ENCODE measurements at regions of chr4 and their contacts with region 1.

Region 1: GRCh38 chr4:37793562-37793961 is 32.9 kb upstream of the PGM2 start:
- DNase-seq: peak in 3 of 4 donors; percentile 13 to 21 (median 18)
- ATAC-seq: no peak
- H3K4me3 ChIP-seq: no peak overlapping the region
- H3K27ac ChIP-seq: no peak overlapping the region
- H3K4me1 ChIP-seq: no peaks in the 10 kb centered on the region
- H3K27me3 ChIP-seq: no peaks in the 10 kb centered on the region
- CTCF ChIP-seq: peak in 6 of 7 experiments; percentile 19 to 69 (median 54)
- POLR2A ChIP-seq: no peak

Region 2: GRCh38 chr4:37603070-37603468 is 190.5 kb before region 1 on chr4:
- intact Hi-C with region 1: loop called (anchors 10 kb)
- DNase-seq: peak; percentile 78 to 87 (median 82)
- ATAC-seq: peak; percentile 88
- H3K4me3 ChIP-seq: no peak overlapping the region
- H3K27ac ChIP-seq: no peak overlapping the region
- H3K4me1 ChIP-seq: peaks cover 24% of the 10 kb centered on the region
- H3K27me3 ChIP-seq: no peaks in the 10 kb centered on the region
- CTCF ChIP-seq: peak; percentile 86 to 95 (median 94)
- POLR2A ChIP-seq: no peak